CD4-positive, alpha-beta T cell (primary cell): ENCODE measurements at regions of chr5 and their contacts with region 1.

Region 1: DNA sequence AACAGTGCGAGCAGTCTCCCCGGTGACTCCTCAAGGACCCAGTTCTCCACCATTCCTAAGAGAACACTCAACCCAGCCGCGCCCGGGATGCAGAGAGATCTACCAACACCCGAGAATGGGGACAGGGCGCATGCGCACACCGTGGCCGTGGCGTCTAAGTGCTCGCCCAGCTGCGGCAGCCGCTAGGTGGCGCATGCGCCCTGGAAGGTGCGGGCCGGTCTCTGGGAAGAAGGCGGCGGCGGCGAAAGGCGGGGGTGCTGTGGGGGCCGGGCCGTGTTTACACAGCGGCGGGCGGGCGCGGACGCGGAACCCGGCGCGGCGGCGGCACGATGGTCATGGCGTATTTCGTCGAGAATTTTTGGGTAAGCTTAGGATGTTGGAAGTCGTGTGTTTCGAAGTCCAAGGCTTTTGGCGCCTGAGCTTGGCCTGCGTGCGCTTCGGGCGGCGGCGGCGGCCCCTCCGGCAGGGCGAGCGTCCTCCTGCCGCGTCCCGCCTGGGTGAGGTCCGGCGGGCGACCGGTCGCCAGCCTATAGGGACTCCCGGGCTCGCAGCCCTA is at the start of gene FCHO2:
- DNase-seq: peak; percentile 90 to 99 (median 96)
- ATAC-seq: peak; percentile 95
- H3K4me3 ChIP-seq: peak within 1 kb of the TSS; percentile 92
- H3K4me3 Mint-ChIP-seq: peak within 1 kb of the TSS; percentile 98
- H3K27ac ChIP-seq: no peak within 1 kb of the TSS
- H3K27ac Mint-ChIP-seq: peak within 1 kb of the TSS; percentile 73
- H3K4me1 ChIP-seq: peaks cover 11% of the 10 kb centered on the region
- H3K4me1 Mint-ChIP-seq: peaks cover 18% of the 10 kb centered on the region
- H3K27me3 ChIP-seq: peaks cover 2 to 33% of the 10 kb centered on the region in 2 experiments
- H3K27me3 Mint-ChIP-seq: peaks cover 67% of the 10 kb centered on the region
- CTCF ChIP-seq: peak; percentile 77
- total RNA-seq, gene FCHO2: 2.0 to 2.6 TPM

Region 2: DNA sequence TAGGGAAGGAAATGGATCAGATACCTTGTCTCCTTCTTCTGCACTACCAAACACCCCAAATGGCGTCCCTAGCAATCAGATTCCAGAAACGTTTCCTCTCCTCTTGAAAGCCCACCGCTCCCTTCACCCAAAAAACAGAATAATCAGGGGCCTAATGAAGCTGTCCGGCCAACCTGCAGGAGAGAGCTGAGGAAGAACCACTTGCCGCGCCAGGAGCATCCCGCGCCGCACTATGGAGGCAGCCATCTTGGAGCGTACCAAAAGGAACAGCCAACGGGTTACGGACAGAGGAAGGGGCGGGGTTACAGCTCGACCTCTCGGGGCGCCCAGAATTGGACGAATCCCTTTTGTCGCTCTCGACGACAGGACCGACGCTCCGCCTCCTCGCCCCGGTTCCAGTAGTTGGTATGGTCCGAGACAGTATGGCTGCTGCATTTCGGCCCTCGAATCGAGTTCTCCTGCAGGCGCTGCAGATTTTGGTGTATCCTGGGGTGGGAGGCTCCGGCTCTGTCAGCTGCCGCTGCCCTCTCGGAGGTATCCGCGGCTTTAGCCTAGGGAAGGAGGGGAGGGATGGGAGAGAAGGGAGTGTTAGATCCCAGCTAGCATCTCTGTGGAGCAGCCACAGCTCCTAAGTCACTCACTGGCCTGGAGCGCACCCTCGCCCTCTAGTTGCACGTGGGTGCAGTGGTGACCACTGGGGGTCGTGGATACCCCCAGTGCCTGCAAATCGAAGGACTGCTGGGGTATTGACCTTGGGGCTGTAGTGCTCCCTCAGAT is 635.7 kb before region 1 on chr5 and contains the starts of genes MRPS27 and PTCD2:
- CTCF ChIA-PET with region 1: no interaction called
- POLR2A ChIA-PET with region 1: interaction called, 4 read pairs
- intact Hi-C with region 1: loop called in 1 of 2 experiments (anchors 10 kb)
- DNase-seq: peak; percentile 88 to 99 (median 92)
- ATAC-seq: peak; percentile 99
- H3K4me3 ChIP-seq: peak within 1 kb of the TSS; percentile 94
- H3K4me3 Mint-ChIP-seq: peak within 1 kb of the TSS; percentile 98
- H3K27ac ChIP-seq: peak within 1 kb of the TSS; percentile 62 to 70
- H3K27ac Mint-ChIP-seq: peak within 1 kb of the TSS; percentile 92
- H3K4me1 ChIP-seq: peaks cover 19% of the 10 kb centered on the region
- H3K4me1 Mint-ChIP-seq: peaks cover 34% of the 10 kb centered on the region
- H3K27me3 ChIP-seq: no peaks in the 10 kb centered on the region
- H3K27me3 Mint-ChIP-seq: no peaks in the 10 kb centered on the region
- CTCF ChIP-seq: no peak
- total RNA-seq, gene MRPS27: 25.0 to 26.1 TPM
- total RNA-seq, gene PTCD2: 2.9 to 3.3 TPM

Region 3: GRCh38 chr5:72847989-72848473 is 107.8 kb before region 1 on chr5:
- CTCF ChIA-PET with region 1: interaction called, 3 read pairs
- POLR2A ChIA-PET with region 1: no interaction called
- intact Hi-C with region 1: loop called in 1 of 2 experiments (anchors 10 kb)
- DNase-seq: peak; percentile 68 to 91 (median 77)
- ATAC-seq: peak; percentile 79
- H3K4me3 ChIP-seq: peak overlapping the region; percentile 91
- H3K4me3 Mint-ChIP-seq: peak overlapping the region; percentile 100
- H3K27ac ChIP-seq: peak overlapping the region; percentile 57 to 90
- H3K27ac Mint-ChIP-seq: peak overlapping the region; percentile 96
- H3K4me1 ChIP-seq: peaks cover 11% of the 10 kb centered on the region
- H3K4me1 Mint-ChIP-seq: peaks cover 85% of the 10 kb centered on the region
- H3K27me3 ChIP-seq: no peaks in the 10 kb centered on the region
- H3K27me3 Mint-ChIP-seq: no peaks in the 10 kb centered on the region
- CTCF ChIP-seq: no peak

Region 4: GRCh38 chr5:73387601-73388305 is 431.9 kb after region 1 on chr5:
- CTCF ChIA-PET with region 1: no interaction called
- POLR2A ChIA-PET with region 1: no interaction called
- intact Hi-C with region 1: loop called in 1 of 2 experiments (anchors 10 kb)
- DNase-seq: peak in 13 of 14 experiments; percentile 25 to 88 (median 44)
- ATAC-seq: peak; percentile 95
- H3K4me3 ChIP-seq: no peak overlapping the region
- H3K4me3 Mint-ChIP-seq: peak overlapping the region; percentile 62
- H3K27ac ChIP-seq: peak overlapping the region in 1 of 2 donors; percentile 4
- H3K27ac Mint-ChIP-seq: peak overlapping the region; percentile 34
- H3K4me1 ChIP-seq: peaks cover 29% of the 10 kb centered on the region
- H3K4me1 Mint-ChIP-seq: peaks cover 38% of the 10 kb centered on the region
- H3K27me3 ChIP-seq: peaks cover 12 to 14% of the 10 kb centered on the region in 2 experiments
- H3K27me3 Mint-ChIP-seq: peaks cover 19% of the 10 kb centered on the region
- CTCF ChIP-seq: no peak

Region 5: DNA sequence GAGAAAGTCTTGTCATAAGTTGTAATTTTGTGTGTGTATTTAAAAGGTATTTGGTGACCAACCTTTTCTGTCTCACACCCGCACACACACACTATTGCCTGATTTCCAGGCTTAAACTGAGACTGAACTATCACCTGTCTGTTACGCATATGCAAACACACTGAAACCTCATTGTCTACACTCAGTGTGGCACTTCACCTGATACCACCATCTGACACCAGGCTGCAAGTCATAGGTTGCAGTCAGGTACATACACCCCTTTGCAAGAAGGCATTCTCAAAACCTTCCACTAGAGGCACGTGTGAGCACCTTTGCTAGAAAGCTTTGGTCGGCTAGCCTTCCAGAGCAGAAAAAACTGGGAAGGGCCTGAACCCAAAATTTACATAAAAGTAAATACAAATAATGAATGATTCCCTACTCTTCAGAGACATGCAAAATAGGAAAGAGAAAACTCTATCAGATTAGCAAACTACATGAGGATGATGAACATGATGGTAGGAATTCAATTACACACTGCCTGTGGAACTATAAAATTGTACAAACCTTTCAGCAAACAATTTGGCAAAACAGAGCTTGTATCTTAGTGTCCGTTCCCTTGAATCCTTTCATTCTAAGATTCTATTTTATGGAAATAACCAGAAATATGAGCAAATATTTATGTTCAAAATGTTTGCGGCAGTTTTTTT is 498.6 kb after region 1 on chr5:
- CTCF ChIA-PET with region 1: interaction called, 7 read pairs
- POLR2A ChIA-PET with region 1: no interaction called
- intact Hi-C with region 1: loop called (anchors 2 to 5 kb)
- DNase-seq: peak in 9 of 14 experiments; percentile 17 to 75 (median 34)
- ATAC-seq: peak; percentile 92
- H3K4me3 ChIP-seq: no peak overlapping the region
- H3K4me3 Mint-ChIP-seq: no peak overlapping the region
- H3K27ac ChIP-seq: no peak overlapping the region
- H3K27ac Mint-ChIP-seq: no peak overlapping the region
- H3K4me1 ChIP-seq: peaks cover 14% of the 10 kb centered on the region
- H3K4me1 Mint-ChIP-seq: no peaks in the 10 kb centered on the region
- H3K27me3 ChIP-seq: peaks cover 54 to 84% of the 10 kb centered on the region in 2 experiments
- H3K27me3 Mint-ChIP-seq: peaks cover 85% of the 10 kb centered on the region
- CTCF ChIP-seq: peak; percentile 82